Vagina (tissue), 2 donors: ENCODE measurements at regions of chr16 and their contacts with region 1.

Region 1: GRCh38 chr16:15493466-15494150 is 59.2 kb downstream of the BMERB1 start:
- DNase-seq: no peak
- H3K4me3 ChIP-seq: no peak overlapping the region
- H3K27ac ChIP-seq: peak overlapping the region; percentile 79
- H3K4me1 ChIP-seq: peaks cover 32% of the 10 kb centered on the region
- H3K27me3 ChIP-seq: no peaks in the 10 kb centered on the region
- CTCF ChIP-seq: no peak
- POLR2A ChIP-seq: no peak

Region 2: DNA sequence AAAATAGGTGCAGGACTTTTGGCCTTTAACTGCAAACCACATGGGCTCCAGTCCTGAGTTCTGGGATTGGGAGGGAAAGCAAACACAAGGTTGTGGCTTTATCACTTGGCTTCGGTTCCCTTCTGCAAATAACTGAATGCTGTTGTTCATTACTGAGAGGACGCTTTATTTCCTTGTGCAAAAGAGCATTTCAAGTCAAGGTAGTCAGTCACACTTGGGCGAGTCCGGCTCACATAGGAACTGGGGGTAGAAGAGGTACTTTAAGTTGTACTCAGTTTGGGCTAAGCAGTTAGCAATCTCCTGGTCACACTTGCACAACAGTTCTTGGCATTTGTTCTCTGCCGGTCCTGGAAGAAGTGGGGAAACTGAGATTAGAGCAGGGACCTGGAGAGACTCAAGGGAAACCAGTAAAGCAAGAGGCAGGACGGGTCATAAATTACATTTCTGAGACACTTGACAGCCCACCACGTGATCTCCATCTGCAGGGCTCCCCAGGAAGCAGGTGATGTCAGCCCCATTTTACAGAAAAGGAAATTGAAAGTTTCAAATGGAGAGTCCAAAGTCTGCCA is 821.1 kb before region 1 on chr16:
- intact Hi-C with region 1: no loop called
- DNase-seq: no peak
- H3K4me3 ChIP-seq: no peak overlapping the region
- H3K27ac ChIP-seq: no peak overlapping the region
- H3K4me1 ChIP-seq: no peaks in the 10 kb centered on the region
- H3K27me3 ChIP-seq: no peaks in the 10 kb centered on the region
- CTCF ChIP-seq: no peak
- POLR2A ChIP-seq: no peak

Region 3: GRCh38 chr16:15572329-15573001 is 78.9 kb after region 1 on chr16:
- intact Hi-C with region 1: no loop called
- DNase-seq: no peak
- H3K4me3 ChIP-seq: no peak overlapping the region
- H3K27ac ChIP-seq: peak overlapping the region; percentile 53
- H3K4me1 ChIP-seq: peaks cover 31% of the 10 kb centered on the region
- H3K27me3 ChIP-seq: no peaks in the 10 kb centered on the region
- CTCF ChIP-seq: no peak
- POLR2A ChIP-seq: no peak

Region 4: DNA sequence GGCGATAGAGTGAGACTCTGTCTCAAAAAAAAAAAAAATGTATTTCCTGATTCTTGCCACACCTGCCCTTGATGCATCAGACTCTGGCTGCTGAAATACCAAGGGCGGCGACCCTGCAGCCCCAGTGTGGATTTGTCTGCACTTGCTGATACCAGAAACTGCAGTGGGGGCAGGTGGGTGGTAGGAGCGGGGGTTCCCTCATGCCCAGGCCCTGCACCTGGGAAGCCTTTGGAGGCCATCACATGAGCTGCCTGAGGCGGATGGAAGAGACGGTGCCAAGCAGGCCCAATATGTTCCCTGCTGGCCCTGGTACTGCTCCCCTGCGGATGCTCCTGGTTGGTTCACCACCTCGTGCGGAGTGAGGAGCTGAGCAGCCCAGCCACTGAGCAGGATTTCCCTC is 98.7 kb after region 1 on chr16:
- intact Hi-C with region 1: loop called (anchors 10 kb)
- DNase-seq: peak in 1 of 2 donors; percentile 92
- H3K4me3 ChIP-seq: no peak overlapping the region
- H3K27ac ChIP-seq: peak overlapping the region; percentile 24
- H3K4me1 ChIP-seq: peaks cover 25% of the 10 kb centered on the region
- H3K27me3 ChIP-seq: no peaks in the 10 kb centered on the region
- CTCF ChIP-seq: no peak
- POLR2A ChIP-seq: no peak